Calu3 (cell line): ENCODE measurements at regions of chr4 and their contacts with region 1.

Region 1: DNA sequence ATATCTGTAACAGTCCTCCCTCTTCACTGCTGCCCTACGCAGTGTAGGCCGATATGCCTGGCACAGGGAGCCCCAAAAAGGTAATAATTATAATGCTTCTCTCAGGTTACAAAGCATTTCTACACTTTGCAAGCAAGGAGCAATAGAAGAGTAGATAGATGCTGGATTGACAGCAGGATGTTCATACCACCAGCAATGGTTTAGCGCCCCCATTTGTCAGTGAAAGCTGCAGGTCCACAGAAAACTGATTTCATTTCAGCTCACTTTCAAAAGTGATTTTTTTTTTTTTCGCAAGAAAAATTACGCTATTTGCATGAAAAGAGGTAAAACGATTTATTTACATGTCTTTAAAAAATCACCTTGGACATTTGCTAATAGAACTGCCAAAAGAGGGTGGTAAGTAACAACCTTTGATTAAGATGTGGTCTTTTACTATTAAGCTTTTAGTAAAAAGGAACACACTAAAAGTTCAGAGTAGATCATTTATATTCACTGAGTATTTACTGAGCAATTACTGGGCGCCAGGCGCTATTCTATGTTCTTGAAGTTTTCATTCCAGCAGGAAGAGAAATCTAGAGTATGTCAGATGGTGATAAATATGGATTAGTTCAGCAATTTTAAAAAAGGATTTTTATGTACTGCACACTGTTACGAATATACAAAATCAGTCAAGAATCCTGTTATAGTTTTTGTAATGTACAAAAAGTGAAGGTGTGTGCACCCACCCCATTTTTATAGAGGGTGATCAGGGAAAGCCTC is 34.4 kb downstream of the HPF1 start:
- DNase-seq: no peak
- H3K4me3 Mint-ChIP-seq: no peak overlapping the region
- H3K27ac Mint-ChIP-seq: no peak overlapping the region
- H3K4me1 Mint-ChIP-seq: no peaks in the 10 kb centered on the region
- H3K27me3 Mint-ChIP-seq: no peaks in the 10 kb centered on the region
- CTCF ChIP-seq: peak; percentile 17

Region 2: DNA sequence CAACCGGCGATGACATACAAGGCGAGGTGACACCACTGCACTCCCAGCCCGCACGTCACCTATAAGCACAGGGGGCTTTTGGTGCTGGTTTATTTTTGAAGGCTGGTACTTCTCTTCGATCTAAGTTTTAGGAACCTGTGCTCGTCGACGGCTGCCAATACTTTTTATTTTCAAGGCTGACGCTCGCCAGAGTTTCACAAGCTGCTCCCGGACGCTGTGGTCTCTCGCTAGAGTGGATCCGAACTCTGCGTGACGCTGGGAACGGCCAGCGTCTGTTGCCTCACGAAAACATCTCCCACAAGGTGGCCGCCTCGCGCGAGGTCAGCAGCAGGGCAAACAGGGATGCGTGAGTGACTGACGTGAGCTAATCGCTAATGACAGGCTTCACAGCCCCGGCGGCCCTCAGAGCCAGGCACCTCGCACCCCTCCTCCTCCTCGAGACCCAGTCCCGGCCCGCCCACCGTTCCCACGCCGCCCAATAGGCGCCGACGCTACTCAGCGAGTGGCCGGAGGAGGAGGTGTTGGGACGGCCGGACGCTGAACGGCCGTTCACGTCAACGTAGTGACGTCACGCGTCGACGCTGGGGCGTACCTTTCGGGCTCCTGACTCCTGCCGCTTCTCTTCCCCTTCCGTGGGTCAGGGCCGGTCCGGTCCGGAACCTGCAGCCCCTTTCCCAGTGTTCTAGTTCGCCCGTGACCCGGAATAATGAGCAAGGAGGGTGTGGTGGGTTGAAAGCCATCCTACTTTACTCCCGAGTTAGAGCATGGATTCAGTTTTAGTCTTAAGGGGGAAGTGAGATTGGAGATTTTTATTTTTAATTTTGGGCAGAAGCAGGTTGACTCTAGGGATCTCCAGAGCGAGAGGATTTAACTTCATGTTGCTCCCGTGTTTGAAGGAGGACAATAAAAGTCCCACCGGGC is 103.2 kb before region 1 on chr4 and contains the start of gene CLCN3:
- CTCF ChIA-PET with region 1: interaction called, 4 read pairs
- intact Hi-C with region 1: loop called (anchors 10 kb)
- DNase-seq: peak; percentile 94
- H3K4me3 Mint-ChIP-seq: peak within 1 kb of the TSS; percentile 87
- H3K27ac Mint-ChIP-seq: peak within 1 kb of the TSS; percentile 97
- H3K4me1 Mint-ChIP-seq: peaks cover 7% of the 10 kb centered on the region
- H3K27me3 Mint-ChIP-seq: no peaks in the 10 kb centered on the region
- CTCF ChIP-seq: no peak
- total RNA-seq, gene CLCN3: 55.7 and 57.8 TPM in 2 replicates

Region 3: GRCh38 chr4:169659716-169660670 is 63.4 kb before region 1 on chr4:
- CTCF ChIA-PET with region 1: no interaction called
- intact Hi-C with region 1: no loop called
- DNase-seq: peak; percentile 76
- H3K4me3 Mint-ChIP-seq: peak overlapping the region; percentile 85
- H3K27ac Mint-ChIP-seq: peak overlapping the region; percentile 100
- H3K4me1 Mint-ChIP-seq: peaks cover 15% of the 10 kb centered on the region
- H3K27me3 Mint-ChIP-seq: no peaks in the 10 kb centered on the region
- CTCF ChIP-seq: no peak

Region 4: GRCh38 chr4:169745291-169745690 is 21.9 kb after region 1 on chr4:
- CTCF ChIA-PET with region 1: interaction called, 3 read pairs
- intact Hi-C with region 1: loop called (anchors 1 kb)
- DNase-seq: no peak
- H3K4me3 Mint-ChIP-seq: no peak overlapping the region
- H3K27ac Mint-ChIP-seq: no peak overlapping the region
- H3K4me1 Mint-ChIP-seq: no peaks in the 10 kb centered on the region
- H3K27me3 Mint-ChIP-seq: no peaks in the 10 kb centered on the region
- CTCF ChIP-seq: no peak